Mammary epithelial cell (primary cell): ENCODE measurements at regions of chr7 and their contacts with region 1.

Region 1: GRCh38 chr7:5354460-5355232 is 69.0 kb downstream of the TNRC18 start:
- DNase-seq: peak; percentile 79
- H3K4me3 ChIP-seq: no peak overlapping the region
- H3K27ac ChIP-seq: peak overlapping the region; percentile 1
- H3K4me1 ChIP-seq: peaks cover 14% of the 10 kb centered on the region
- H3K27me3 ChIP-seq: no peaks in the 10 kb centered on the region
- CTCF ChIP-seq: no peak

Region 2: DNA sequence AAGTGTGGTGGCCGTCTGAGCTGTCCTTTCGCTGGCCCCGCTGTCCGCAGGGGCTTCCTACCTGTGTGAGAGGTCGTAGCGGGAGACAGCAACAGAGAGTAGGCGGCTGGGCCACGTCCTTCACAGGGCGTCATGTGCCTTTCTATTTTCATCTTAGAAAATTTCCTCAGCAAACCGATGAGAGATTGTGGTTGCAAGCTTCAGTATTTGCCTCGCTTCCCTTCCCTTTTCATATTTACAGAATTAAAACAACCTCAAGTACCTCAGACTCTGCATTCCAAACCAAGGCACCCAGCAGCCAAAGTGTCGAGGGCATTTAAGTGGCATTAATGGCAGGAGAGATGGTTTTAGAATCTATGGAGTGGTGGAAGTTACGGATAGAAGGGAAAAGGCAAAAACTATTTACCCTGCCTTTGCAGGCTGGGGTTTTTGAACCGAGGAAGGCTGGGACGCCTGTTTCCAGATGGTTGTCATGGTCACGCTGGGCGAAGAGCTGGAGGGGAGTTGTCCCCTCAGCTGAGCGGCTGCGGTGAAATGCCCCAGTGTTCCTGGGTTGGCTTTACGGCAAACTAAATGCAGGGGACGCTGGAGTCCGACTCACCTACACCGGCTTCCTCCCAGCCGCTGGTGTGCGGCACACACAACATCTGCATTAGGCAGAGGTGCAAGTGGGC is 122.7 kb before region 1 on chr7:
- CTCF ChIA-PET with region 1: no interaction called
- dilution Hi-C with region 1: no loop called
- in situ Hi-C with region 1: no loop called
- intact Hi-C with region 1: loop called (anchors 10 kb)
- DNase-seq: no peak
- H3K4me3 ChIP-seq: no peak overlapping the region
- H3K27ac ChIP-seq: no peak overlapping the region
- H3K4me1 ChIP-seq: no peaks in the 10 kb centered on the region
- H3K27me3 ChIP-seq: no peaks in the 10 kb centered on the region
- CTCF ChIP-seq: no peak

Region 3: DNA sequence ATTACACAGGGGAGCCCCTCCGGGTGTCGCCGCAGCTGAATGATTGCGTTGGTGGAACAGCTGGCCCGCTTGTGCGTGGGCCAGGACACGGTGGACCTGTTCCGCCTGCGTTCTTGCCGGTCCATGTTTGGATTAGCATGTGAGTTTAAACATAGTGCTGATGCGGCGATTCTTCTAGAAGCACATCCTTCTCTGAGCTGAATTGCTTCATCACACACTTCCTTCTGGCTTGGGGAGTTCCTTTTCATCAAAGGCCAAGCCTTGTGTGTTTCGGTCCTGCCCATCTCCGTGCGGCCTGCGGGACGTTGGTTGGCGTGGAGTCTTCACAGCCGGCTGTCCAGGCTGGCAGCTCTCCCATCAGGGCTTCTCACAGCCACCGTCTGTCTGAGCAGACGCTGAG is 117.4 kb before region 1 on chr7:
- CTCF ChIA-PET with region 1: interaction called, 10 read pairs
- dilution Hi-C with region 1: no loop called
- in situ Hi-C with region 1: no loop called
- intact Hi-C with region 1: loop called (anchors 10 kb)
- DNase-seq: peak; percentile 21
- H3K4me3 ChIP-seq: no peak overlapping the region
- H3K27ac ChIP-seq: no peak overlapping the region
- H3K4me1 ChIP-seq: peaks cover 4% of the 10 kb centered on the region
- H3K27me3 ChIP-seq: no peaks in the 10 kb centered on the region
- CTCF ChIP-seq: no peak

Region 4: DNA sequence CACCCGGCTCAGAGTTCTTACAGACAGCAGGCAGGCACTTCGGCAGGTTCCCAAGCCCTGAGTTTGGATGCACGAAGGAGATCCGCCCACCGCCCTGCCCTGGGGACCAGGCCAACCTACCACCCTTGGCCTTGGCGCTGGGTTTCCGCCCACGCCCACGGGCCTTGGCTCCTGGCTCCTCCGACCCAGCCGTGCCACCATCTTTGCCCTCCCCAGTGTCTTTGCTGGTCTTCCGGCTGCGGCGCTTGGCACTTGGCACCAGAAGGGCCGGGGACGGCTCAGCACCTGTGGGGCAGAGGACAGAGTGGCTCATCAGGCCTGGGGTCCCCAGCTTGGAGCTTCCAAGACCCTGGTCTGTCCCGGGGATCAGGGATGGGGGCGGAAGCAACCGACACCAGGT is 39.8 kb before region 1 on chr7:
- CTCF ChIA-PET with region 1: no interaction called
- dilution Hi-C with region 1: loop called (anchors 5 kb)
- in situ Hi-C with region 1: no loop called
- intact Hi-C with region 1: no loop called
- DNase-seq: no peak
- H3K4me3 ChIP-seq: no peak overlapping the region
- H3K27ac ChIP-seq: no peak overlapping the region
- H3K4me1 ChIP-seq: no peaks in the 10 kb centered on the region
- H3K27me3 ChIP-seq: no peaks in the 10 kb centered on the region
- CTCF ChIP-seq: no peak

Region 5: DNA sequence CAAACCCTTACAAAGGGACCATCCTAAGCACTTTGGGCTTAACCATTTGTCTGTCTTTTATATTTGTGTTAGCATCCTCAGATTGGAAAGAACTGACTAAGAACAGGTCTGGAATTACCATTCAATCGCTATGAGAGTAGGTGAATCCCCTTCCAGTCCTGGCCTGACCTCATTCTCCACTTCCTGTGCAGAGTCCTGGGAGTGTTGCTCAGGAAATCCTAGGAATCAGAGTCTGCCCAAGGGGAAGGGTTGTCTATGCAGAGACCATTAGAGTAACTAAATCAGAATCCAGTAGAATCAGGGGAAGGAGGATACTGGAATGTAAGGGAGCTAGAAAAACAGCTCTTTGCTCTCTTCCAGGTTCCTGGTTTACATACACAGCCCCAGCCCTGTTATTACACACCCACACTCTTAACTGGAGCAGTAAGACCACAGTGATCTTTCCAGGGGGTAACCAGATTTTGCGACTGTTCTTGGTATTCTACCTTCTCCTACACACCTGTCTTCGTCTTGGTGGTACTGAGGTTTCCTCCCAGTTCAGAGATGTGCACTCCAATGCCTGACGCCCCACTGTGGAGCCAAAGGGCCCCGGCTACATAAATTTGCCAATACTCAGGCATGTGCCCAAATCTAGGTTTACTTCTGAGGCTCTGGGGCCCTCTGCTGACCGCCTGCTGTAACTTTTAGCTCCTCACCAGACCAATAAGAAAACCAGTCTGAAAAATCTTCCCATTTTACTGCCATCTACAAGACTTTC is 323.1 kb after region 1 on chr7:
- CTCF ChIA-PET with region 1: no interaction called
- dilution Hi-C with region 1: no loop called
- in situ Hi-C with region 1: loop called in 1 of 2 experiments (anchors 25 kb)
- intact Hi-C with region 1: no loop called
- DNase-seq: peak; percentile 63
- H3K4me3 ChIP-seq: no peak overlapping the region
- H3K27ac ChIP-seq: peak overlapping the region; percentile 30
- H3K4me1 ChIP-seq: peaks cover 11% of the 10 kb centered on the region
- H3K27me3 ChIP-seq: no peaks in the 10 kb centered on the region
- CTCF ChIP-seq: peak; percentile 75